Sciatic nerve (tissue), 2 donors: ENCODE measurements at regions of chr15 and their contacts with region 1.

Region 1: DNA sequence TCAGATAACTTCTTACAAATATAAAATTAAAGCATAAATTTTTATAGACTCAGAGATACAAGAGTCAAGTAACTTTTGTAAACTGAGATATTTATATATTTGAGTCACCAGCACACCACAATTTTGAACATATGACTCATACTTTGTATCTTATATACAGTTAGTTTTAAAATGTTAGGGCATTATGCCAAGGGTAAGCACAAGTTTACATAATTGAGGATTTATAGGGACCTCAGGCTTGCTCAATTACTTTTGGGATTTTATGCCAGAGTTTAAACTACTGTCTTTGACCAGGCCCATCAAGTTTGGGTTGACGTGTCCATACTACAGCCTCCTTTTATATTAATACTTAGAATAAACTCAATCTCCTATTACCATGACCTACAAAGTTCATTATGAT is 7.4 kb upstream of the FGF7 start:
- DNase-seq: no peak
- ATAC-seq: no peak

Region 2: GRCh38 chr15:49242820-49243219 is 172.8 kb before region 1 on chr15:
- intact Hi-C with region 1: loop called (anchors 10 kb)
- DNase-seq: no peak
- ATAC-seq: peak; percentile 59

Region 3: GRCh38 chr15:49286649-49287404 is 128.8 kb before region 1 on chr15:
- intact Hi-C with region 1: no loop called
- DNase-seq: no peak
- ATAC-seq: peak; percentile 77